ENCODE measurements at regions of chr17 and their contacts with region 1.

Region 1: DNA sequence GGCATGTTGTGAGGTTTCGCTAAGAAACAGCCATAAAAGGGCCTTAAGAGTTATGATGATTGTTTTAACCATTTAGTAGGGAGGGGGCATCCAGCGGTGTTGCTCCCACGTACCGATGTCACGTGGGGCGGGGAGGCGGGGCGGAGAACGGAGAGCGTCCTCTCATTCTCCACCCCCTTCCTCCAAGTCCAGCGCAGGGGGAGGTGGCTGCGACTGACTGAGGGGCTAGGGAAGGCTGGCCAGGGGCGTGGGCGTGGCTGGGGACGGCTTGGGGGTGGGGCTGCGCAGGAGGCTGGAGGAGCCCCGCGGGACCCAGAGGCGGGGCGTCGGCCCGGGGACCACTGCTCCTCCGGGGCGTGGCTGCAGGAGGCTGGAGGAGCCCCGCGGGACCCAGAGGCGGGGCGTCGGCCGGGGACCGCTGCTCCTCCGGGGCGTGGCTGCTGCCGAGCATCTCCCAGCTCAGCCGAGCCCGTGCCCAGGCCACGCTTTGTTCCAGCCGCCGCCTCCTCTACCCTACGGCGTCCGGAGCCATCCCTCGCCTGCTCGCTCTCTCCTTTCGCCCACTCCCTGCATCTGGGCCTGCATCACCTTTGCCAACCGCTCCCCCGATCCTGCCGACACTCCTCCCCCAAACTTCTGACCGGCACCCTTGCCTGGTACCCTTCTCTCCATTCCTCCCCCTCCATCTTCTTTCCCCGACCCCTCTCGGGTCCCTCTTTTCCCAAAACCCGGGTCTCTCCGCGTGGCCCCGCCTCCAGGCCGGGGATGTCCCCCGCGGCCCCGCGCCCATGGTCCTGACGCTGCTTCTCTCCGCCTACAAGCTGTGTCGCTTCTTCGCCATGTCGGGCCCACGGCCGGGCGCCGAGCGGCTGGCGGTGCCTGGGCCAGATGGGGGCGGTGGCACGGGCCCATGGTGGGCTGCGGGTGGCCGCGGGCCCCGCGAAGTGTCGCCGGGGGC is at the start of gene SARM1:
- DNase-seq: no peak
- H3K4me3 ChIP-seq: no peak within 1 kb of the TSS
- H3K27ac ChIP-seq: no peak within 1 kb of the TSS
- H3K4me1 ChIP-seq: peaks cover 18% of the 10 kb centered on the region
- H3K27me3 ChIP-seq: no peaks in the 10 kb centered on the region
- CTCF ChIP-seq: no peak
- total RNA-seq, gene SARM1: 7.3 and 8.6 TPM in 2 replicates

Region 2: DNA sequence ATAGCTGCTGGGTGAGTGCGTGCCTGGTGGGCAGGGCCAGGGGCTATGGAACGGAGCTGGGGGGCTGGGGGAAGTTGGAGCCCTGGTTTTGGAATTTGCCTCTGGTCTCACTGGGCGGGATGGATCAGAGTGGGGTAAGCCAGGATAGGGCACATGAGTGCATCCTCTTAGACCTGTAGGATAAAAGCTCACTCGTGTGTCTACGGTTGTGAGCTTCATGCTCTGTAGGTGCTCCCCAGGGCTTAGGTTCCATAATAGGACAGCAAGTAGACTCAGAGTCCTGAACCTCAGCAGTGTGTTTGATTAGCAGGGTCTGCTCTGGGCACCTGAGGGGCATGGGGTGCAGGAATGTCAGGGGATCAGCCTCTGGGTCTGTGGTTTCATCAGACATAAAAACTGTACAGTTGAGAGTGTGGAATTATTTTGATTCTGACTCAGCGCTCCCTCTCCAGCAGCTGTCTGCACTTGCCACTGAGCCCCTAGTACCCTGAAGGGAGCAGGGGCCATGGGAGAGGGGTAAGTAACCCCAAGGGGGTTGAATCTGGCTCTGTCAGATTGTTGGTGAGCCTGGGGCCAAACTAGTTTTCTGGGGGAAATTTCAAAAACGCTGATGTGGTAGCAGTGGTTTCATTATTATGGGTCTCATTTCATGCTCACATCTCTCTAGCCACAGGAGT is 824.8 kb before region 1 on chr17:
- CTCF ChIA-PET with region 1: no interaction called
- POLR2A ChIA-PET with region 1: interaction called, 16 read pairs
- intact Hi-C with region 1: no loop called
- DNase-seq: no peak
- H3K4me3 ChIP-seq: no peak overlapping the region
- H3K27ac ChIP-seq: no peak overlapping the region
- H3K4me1 ChIP-seq: peaks cover 24% of the 10 kb centered on the region
- H3K27me3 ChIP-seq: no peaks in the 10 kb centered on the region
- CTCF ChIP-seq: no peak

Region 3: GRCh38 chr17:28318759-28319660 is 52.5 kb before region 1 on chr17 and contains the start of gene TMEM97:
- CTCF ChIA-PET with region 1: no interaction called
- POLR2A ChIA-PET with region 1: no interaction called
- intact Hi-C with region 1: loop called (anchors 2 kb)
- DNase-seq: peak; percentile 93
- H3K4me3 ChIP-seq: peak within 1 kb of the TSS; percentile 75
- H3K27ac ChIP-seq: no peak within 1 kb of the TSS
- H3K4me1 ChIP-seq: peaks cover 34% of the 10 kb centered on the region
- H3K27me3 ChIP-seq: no peaks in the 10 kb centered on the region
- CTCF ChIP-seq: 0 out of 2 replicates have a peak, but pooled peaks have one; percentile 34
- total RNA-seq, gene TMEM97: 28.8 and 46.4 TPM in 2 replicates

Region 4: GRCh38 chr17:28416703-28417311 is 45.3 kb after region 1 on chr17:
- CTCF ChIA-PET with region 1: interaction called, 5 read pairs
- POLR2A ChIA-PET with region 1: interaction called, 39 read pairs
- intact Hi-C with region 1: no loop called
- DNase-seq: peak; percentile 44 to 55
- H3K4me3 ChIP-seq: no peak overlapping the region
- H3K27ac ChIP-seq: no peak overlapping the region
- H3K4me1 ChIP-seq: no peaks in the 10 kb centered on the region
- H3K27me3 ChIP-seq: no peaks in the 10 kb centered on the region
- CTCF ChIP-seq: peak; percentile 77

Region 5: GRCh38 chr17:28540231-28540630 is 168.7 kb after region 1 on chr17:
- CTCF ChIA-PET with region 1: no interaction called
- POLR2A ChIA-PET with region 1: no interaction called
- intact Hi-C with region 1: no loop called
- DNase-seq: no peak
- H3K4me3 ChIP-seq: no peak overlapping the region
- H3K27ac ChIP-seq: no peak overlapping the region
- H3K4me1 ChIP-seq: no peaks in the 10 kb centered on the region
- H3K27me3 ChIP-seq: 0 out of 2 replicates have a peak, but pooled peaks cover 4% of the 10 kb centered on the region
- CTCF ChIP-seq: no peak